ENCODE measurements at regions of chr17 and their contacts with region 1.

Region 1: GRCh38 chr17:55513885-55514591 is 2.8 kb upstream of the SMIM36 start:
- DNase-seq: peak; percentile 60
- H3K4me3 ChIP-seq: no peak overlapping the region
- H3K27ac ChIP-seq: no peak overlapping the region
- H3K4me1 ChIP-seq: no peaks in the 10 kb centered on the region
- H3K27me3 ChIP-seq: no peaks in the 10 kb centered on the region
- CTCF ChIP-seq: peak; percentile 94 to 96

Region 2: GRCh38 chr17:55366020-55366481 is 148.0 kb before region 1 on chr17:
- CTCF ChIA-PET with region 1: interaction called, 4 read pairs
- dilution Hi-C with region 1: no loop called
- in situ Hi-C with region 1: loop called in 1 of 2 experiments (anchors 10 kb)
- intact Hi-C with region 1: no loop called
- DNase-seq: no peak
- H3K4me3 ChIP-seq: no peak overlapping the region
- H3K27ac ChIP-seq: no peak overlapping the region
- H3K4me1 ChIP-seq: no peaks in the 10 kb centered on the region
- H3K27me3 ChIP-seq: peaks cover 2% of the 10 kb centered on the region
- CTCF ChIP-seq: no peak

Region 3: DNA sequence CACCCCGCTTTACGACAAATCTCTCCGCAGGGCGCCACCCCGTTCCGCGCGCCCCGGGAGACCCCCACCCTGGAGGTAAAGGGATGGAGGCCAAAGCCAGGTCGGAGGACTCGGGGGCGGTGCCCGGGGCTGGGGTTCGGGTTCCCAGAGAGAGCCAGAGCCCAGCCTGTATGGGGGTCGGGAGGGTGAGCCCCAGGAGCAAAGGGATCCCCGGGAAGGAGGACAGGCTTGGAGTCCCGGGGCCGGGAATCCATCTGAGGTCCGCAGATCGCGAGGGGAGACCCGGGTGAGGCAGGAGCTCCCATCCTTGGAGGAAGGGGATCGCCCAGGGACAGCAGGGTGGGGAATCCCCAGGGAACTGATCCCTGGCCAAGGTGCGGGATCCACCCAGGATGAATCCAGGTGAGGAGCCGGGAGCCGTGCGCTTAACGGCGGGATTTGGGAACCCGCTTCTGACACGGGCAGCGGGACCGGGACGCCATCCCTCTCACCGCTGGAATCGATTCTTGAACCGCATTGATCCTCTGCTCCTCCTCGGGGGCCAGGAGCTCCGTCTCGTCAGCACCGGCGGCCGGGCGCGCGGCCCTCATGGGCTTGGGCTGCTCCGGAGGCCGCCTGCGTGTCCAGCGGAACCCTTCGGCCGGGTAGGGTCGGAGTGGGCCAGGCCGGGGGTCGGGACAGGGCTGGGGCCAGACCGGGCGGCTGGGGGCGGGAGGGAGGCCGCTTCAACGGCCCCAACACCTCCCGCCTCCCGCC is 92.7 kb before region 1 on chr17 and contains the start of gene MMD:
- CTCF ChIA-PET with region 1: interaction called, 4 read pairs
- dilution Hi-C with region 1: no loop called
- in situ Hi-C with region 1: no loop called
- intact Hi-C with region 1: loop called (anchors 1 kb)
- DNase-seq: peak; percentile 63
- H3K4me3 ChIP-seq: peak within 1 kb of the TSS; percentile 84 to 92 (median 85)
- H3K27ac ChIP-seq: peak within 1 kb of the TSS; percentile 89
- H3K4me1 ChIP-seq: peaks cover 10% of the 10 kb centered on the region
- H3K27me3 ChIP-seq: no peaks in the 10 kb centered on the region
- CTCF ChIP-seq: no peak
- total RNA-seq, gene MMD: 7.8 to 9.0 TPM

Measured in mammary epithelial cell (primary cell).